Dorsolateral prefrontal cortex (tissue), 120 donors: ENCODE measurements at regions of chr6 and their contacts with region 1.

Region 1: DNA sequence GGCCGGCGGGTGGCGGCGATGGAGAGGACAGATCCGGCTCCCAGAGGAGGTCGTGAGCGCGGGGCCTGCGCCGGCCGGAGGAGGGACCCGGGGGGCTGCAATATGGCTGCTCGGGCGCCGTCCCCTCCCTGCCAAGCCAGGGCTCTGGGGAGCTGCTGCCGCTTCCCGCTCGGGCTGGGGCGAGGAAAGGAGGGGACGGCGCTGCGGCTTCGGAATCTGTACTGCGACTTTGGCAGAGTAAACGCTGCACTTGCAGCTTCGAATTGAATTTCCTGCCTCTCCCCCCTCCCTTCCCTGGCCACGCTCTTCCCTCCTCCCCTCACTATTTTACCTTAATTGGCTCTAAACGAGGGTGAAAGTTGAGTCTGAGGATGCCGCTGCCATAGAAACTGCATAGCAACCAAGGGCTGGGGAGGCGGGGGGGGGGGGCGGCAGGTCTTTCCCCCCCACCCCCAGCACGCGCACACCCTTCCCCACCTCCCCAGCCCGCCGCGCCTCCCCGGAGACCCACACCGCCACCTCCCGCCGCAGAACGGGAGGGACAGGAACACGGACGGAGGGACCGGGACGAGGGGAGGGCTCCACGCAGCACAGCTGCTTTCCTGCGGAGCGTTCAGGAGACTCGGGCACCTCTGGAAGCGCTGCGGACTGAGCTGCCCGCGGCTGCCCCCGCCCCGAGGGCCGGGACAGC is 93.9 kb downstream of the RNASET2 start:
- DNase-seq: peak in 4 of 10 donors; percentile 56 to 65 (median 60)
- H3K4me3 ChIP-seq: peak overlapping the region; percentile 42 to 84 (median 71)
- H3K27ac ChIP-seq: peak overlapping the region in 56 of 59 donors; percentile 10 to 91 (median 76)
- H3K27me3 ChIP-seq: peaks cover 0 to 18% (median 0%) of the 10 kb centered on the region in 45 donors
- CTCF ChIP-seq: peak in 9 of 56 donors; percentile 6 to 20 (median 10)

Region 2: DNA sequence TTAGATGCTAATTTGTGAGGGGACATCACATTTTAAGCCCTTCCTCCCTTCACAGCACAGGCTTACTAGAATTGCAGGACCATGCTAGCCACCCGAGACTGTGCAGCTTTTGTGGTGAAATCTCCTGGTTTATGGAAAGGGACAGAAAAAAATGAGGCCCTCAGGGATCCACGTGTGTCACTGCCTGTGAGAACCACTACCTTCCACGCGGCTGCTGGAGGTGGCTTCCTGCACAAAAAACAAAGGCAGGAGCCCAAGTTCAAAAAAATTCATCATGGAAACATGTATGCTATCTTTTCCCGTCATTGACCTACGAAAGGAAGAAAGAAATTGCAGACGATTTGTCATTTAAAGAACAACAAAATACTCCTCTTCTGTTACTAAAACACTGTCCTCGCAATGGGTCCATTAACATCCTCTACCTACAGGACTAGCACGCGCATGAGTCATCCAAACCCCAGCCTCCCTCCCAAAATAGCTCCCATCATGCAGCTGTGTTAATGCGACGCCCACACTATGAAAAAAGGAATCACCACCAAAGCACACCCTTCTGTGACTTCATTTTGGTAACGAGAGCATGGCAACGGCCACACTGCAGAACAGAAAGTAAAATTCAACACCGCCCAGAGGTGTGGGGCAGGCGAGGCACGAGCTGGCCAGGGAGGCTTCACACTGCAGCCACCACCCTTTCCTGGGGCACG is 321.7 kb before region 1 on chr6:
- intact Hi-C with region 1: no loop called
- DNase-seq: peak in 4 of 10 donors; percentile 60 to 75 (median 62)
- H3K4me3 ChIP-seq: peak overlapping the region in 11 of 59 donors; percentile 1 to 23 (median 13)
- H3K27ac ChIP-seq: peak overlapping the region in 43 of 59 donors; percentile 8 to 76 (median 50)
- H3K27me3 ChIP-seq: no peaks in the 10 kb centered on the region
- CTCF ChIP-seq: no peak

Region 3: GRCh38 chr6:166815629-166816028 is 46.8 kb before region 1 on chr6:
- intact Hi-C with region 1: no loop called
- DNase-seq: no peak
- H3K4me3 ChIP-seq: no peak overlapping the region
- H3K27ac ChIP-seq: no peak overlapping the region
- H3K27me3 ChIP-seq: no peaks in the 10 kb centered on the region
- CTCF ChIP-seq: no peak

Region 4: GRCh38 chr6:166956444-166957086 is 94.1 kb after region 1 on chr6 and contains the start of gene RNASET2:
- intact Hi-C with region 1: loop called in 1 of 2 experiments (anchors 10 kb)
- DNase-seq: peak; percentile 86 to 96 (median 91)
- H3K4me3 ChIP-seq: peak within 1 kb of the TSS; percentile 63 to 99 (median 87)
- H3K27ac ChIP-seq: peak within 1 kb of the TSS in 56 of 59 donors; percentile 28 to 95 (median 85)
- H3K27me3 ChIP-seq: no peaks in the 10 kb centered on the region
- CTCF ChIP-seq: peak in 8 of 56 donors; percentile 10 to 43 (median 21)
- total RNA-seq, gene RNASET2: 26.9 to 141 (median 66.3) TPM